ENCODE measurements at regions of chr1 and their contacts with region 1.

Region 1: GRCh38 chr1:41282679-41283317 is 40.7 kb upstream of the SCMH1 start:
- DNase-seq: peak; percentile 9
- H3K4me3 ChIP-seq: no peak overlapping the region
- H3K27ac ChIP-seq: no peak overlapping the region
- H3K4me1 ChIP-seq: no peaks in the 10 kb centered on the region
- H3K27me3 ChIP-seq: no peaks in the 10 kb centered on the region
- CTCF ChIP-seq: peak; percentile 76 to 96

Region 2: GRCh38 chr1:41305576-41306363 is 23.0 kb after region 1 on chr1:
- CTCF ChIA-PET with region 1: no interaction called
- dilution Hi-C with region 1: no loop called
- in situ Hi-C with region 1: no loop called
- intact Hi-C with region 1: no loop called
- DNase-seq: no peak
- H3K4me3 ChIP-seq: no peak overlapping the region
- H3K27ac ChIP-seq: no peak overlapping the region
- H3K4me1 ChIP-seq: no peaks in the 10 kb centered on the region
- H3K27me3 ChIP-seq: peaks cover 5% of the 10 kb centered on the region
- CTCF ChIP-seq: no peak

Region 3: GRCh38 chr1:41322835-41323627 is 40.2 kb after region 1 on chr1:
- CTCF ChIA-PET with region 1: no interaction called
- dilution Hi-C with region 1: no loop called
- in situ Hi-C with region 1: no loop called
- intact Hi-C with region 1: loop called (anchors 5 kb)
- DNase-seq: peak; percentile 68
- H3K4me3 ChIP-seq: no peak overlapping the region
- H3K27ac ChIP-seq: no peak overlapping the region
- H3K4me1 ChIP-seq: peaks cover 11% of the 10 kb centered on the region
- H3K27me3 ChIP-seq: no peaks in the 10 kb centered on the region
- CTCF ChIP-seq: peak; percentile 49 to 67

Region 4: GRCh38 chr1:41347274-41347673 is 64.5 kb after region 1 on chr1:
- CTCF ChIA-PET with region 1: no interaction called
- dilution Hi-C with region 1: loop called (anchors 5 kb)
- in situ Hi-C with region 1: no loop called
- intact Hi-C with region 1: no loop called
- DNase-seq: peak; percentile 71
- H3K4me3 ChIP-seq: no peak overlapping the region
- H3K27ac ChIP-seq: no peak overlapping the region
- H3K4me1 ChIP-seq: no peaks in the 10 kb centered on the region
- H3K27me3 ChIP-seq: peaks cover 2% of the 10 kb centered on the region
- CTCF ChIP-seq: no peak

Measured in mammary epithelial cell (primary cell).